ENCODE measurements at regions of chr18 and their contacts with region 1.

Region 1: DNA sequence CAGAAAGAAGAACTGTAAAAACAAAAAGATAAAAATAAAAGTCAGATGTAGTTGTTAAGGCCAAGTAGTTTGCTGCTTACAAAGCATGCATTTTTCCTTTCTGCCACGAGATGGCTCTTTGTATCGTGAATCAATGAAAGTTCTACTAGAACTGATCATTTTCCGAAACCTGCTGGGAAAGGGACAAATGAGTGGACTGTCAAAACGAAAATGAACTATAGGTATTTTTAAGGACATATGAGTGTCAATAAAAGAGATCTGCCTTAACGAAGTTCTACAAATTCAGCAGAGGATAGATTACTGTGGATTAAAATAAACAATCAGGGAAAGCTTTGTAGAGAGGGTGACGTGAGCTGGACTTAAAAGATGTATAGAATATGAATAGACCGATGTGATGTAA is 15.0 kb upstream of the ELOA2 start:
- DNase-seq: no peak
- ATAC-seq: no peak
- H3K4me3 ChIP-seq: no peak overlapping the region
- H3K27ac ChIP-seq: no peak overlapping the region
- H3K4me1 ChIP-seq: no peaks in the 10 kb centered on the region
- H3K27me3 ChIP-seq: no peaks in the 10 kb centered on the region

Region 2: DNA sequence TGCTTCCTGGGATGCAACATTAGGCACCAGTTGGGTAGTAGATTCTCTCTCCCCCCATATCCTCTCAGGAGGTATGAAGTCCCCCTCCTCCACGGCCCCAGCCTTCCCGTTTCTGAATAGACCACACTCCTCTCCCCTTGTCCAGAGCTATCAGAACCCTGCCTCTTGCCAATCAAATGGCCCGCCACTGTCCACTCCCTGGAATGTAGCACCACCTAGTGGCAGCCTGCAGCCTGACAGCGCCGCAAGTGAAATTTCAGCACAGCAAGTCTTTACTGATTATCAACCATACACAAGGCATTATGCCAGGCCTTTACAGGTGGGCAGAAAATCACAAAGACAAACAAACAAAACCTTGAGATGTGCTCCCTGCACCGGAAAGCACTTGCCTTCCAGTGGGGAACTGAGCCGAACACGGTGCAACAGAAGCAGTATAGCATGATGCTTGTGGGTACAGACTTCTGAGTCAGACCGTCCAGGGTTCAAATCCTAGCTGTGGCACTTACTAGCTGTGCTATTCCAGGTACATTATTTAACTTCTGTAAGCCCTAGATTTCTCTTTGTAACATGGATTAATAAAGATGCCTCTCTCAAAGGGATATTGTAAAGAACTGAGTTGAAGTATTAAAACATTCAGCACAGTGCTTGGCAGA is 706.0 kb after region 1 on chr18:
- intact Hi-C with region 1: loop called in 1 of 4 experiments (anchors 5 kb)
- DNase-seq: peak; percentile 55 to 78 (median 75)
- ATAC-seq: peak; percentile 66 to 68
- H3K4me3 ChIP-seq: no peak overlapping the region
- H3K27ac ChIP-seq: no peak overlapping the region
- H3K4me1 ChIP-seq: no peaks in the 10 kb centered on the region
- H3K27me3 ChIP-seq: no peaks in the 10 kb centered on the region

Measured in right cardiac atrium (tissue), 5 donors.